ENCODE measurements at regions of chr1 and their contacts with region 1.

Region 1: DNA sequence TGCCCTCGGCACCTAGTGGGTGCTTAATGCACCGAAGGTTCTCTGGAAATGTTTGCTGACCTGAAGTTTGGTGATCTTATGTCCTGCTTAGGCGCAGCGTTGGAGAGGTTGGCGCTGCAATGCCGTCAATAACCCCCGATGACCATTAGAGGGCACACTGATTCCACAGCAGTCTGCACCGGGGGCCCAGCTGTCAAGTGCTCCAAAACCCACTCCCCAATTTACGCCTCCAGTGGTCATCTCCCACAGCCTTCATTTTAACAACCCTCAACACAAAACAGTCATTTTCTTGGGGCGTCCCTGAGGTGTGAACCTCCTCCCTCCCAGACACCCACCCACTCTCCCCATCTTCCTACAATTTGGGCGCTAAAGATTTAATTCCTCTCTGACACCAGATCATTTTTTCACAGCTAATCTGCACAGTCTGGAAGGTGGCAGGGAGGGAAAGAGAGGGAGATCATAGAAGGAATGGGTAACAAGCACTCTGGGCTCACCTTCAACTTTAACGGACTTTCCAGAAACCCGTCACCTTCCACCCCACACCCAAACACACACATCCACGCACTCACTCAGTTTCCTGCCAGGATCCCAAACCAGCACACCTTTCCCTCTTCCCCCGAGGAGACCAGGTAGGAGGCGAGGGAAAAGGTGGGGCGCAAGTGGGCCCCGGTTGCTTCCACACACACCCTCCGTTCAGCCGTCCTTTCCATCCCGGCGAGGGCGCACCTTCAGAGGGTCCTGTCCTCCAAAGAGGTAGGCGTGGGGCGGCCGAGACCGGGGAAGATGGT is 576 bp upstream of the NPR1 start:
- DNase-seq: peak; percentile 77

Region 2: DNA sequence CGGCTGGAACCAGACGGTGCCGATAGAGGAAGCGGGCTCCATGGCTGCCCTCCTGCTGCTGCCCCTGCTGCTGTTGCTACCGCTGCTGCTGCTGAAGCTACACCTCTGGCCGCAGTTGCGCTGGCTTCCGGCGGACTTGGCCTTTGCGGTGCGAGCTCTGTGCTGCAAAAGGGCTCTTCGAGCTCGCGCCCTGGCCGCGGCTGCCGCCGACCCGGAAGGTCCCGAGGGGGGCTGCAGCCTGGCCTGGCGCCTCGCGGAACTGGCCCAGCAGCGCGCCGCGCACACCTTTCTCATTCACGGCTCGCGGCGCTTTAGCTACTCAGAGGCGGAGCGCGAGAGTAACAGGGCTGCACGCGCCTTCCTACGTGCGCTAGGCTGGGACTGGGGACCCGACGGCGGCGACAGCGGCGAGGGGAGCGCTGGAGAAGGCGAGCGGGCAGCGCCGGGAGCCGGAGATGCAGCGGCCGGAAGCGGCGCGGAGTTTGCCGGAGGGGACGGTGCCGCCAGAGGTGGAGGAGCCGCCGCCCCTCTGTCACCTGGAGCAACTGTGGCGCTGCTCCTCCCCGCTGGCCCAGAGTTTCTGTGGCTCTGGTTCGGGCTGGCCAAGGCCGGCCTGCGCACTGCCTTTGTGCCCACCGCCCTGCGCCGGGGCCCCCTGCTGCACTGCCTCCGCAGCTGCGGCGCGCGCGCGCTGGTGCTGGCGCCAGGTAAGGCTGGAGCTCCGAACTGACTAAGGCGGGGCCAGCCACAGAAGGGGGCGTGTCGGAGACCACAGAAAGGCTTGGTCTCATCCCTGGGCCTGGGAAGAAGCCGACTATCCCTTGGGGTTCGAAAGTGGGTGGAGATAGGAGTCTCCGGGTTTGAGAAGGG is 97.8 kb after region 1 on chr1:
- CTCF ChIA-PET with region 1: interaction called, 12 read pairs
- POLR2A ChIA-PET with region 1: no interaction called
- DNase-seq: peak; percentile 67